ENCODE measurements at regions of chr7 and their contacts with region 1.

Region 1: GRCh38 chr7:16753102-16753931 is at the start of gene TSPAN13:
- DNase-seq: peak; percentile 80
- ATAC-seq: peak; percentile 88
- H3K4me3 Mint-ChIP-seq: peak within 1 kb of the TSS; percentile 88
- H3K27ac Mint-ChIP-seq: peak within 1 kb of the TSS; percentile 84
- H3K4me1 Mint-ChIP-seq: peaks cover 45% of the 10 kb centered on the region
- H3K27me3 Mint-ChIP-seq: no peaks in the 10 kb centered on the region
- CTCF ChIP-seq: no peak
- total RNA-seq, gene TSPAN13: 15.1 and 17.8 TPM in 2 replicates

Region 2: GRCh38 chr7:16420649-16421332 is 332.5 kb before region 1 on chr7:
- CTCF ChIA-PET with region 1: no interaction called
- POLR2A ChIA-PET with region 1: no interaction called
- intact Hi-C with region 1: loop called (anchors 2 kb)
- DNase-seq: peak; percentile 73
- ATAC-seq: peak; percentile 90
- H3K4me3 Mint-ChIP-seq: peak overlapping the region; percentile 93
- H3K27ac Mint-ChIP-seq: peak overlapping the region; percentile 95
- H3K4me1 Mint-ChIP-seq: peaks cover 22% of the 10 kb centered on the region
- H3K27me3 Mint-ChIP-seq: no peaks in the 10 kb centered on the region
- CTCF ChIP-seq: no peak

Region 3: GRCh38 chr7:16492513-16493062 is 260.7 kb before region 1 on chr7:
- CTCF ChIA-PET with region 1: no interaction called
- POLR2A ChIA-PET with region 1: no interaction called
- intact Hi-C with region 1: no loop called
- DNase-seq: no peak
- ATAC-seq: no peak
- H3K4me3 Mint-ChIP-seq: no peak overlapping the region
- H3K27ac Mint-ChIP-seq: no peak overlapping the region
- H3K4me1 Mint-ChIP-seq: no peaks in the 10 kb centered on the region
- H3K27me3 Mint-ChIP-seq: peaks cover 7% of the 10 kb centered on the region
- CTCF ChIP-seq: no peak

Region 4: DNA sequence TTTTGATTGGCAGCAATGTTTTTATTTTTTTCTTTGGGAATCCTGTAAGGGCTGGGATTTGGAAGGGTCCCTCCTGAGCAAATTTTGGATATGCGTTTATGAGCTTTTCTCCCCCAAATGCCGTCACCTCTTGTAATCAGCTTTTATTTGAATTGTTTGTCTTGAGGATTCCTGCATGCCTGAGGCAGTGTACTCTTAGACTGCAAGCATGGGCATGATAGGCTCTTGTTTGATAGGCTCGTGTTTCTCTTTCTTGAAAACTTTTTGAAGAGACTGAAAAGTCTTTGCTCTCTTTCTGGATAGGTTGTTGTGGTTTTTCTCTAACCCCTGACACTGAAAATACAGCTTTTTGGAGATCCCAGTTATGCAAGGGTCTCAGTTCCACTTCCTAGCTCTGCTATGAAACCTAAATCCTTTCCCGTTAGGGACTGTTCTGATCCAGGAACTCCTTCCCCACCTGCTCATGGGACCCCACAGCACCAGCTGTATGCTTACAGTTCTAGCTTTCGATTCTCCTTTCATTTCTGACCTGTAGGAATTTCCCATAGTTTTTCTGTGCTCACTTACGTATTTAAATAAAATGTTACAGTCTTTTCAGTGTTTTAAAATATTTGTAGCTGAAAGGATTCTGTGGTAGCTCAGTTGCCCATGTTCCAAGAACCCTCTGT is 17.5 kb after region 1 on chr7:
- CTCF ChIA-PET with region 1: interaction called, 3 read pairs
- POLR2A ChIA-PET with region 1: interaction called, 5 read pairs
- intact Hi-C with region 1: loop called (anchors 1 kb)
- DNase-seq: no peak
- ATAC-seq: no peak
- H3K4me3 Mint-ChIP-seq: peak overlapping the region; percentile 60
- H3K27ac Mint-ChIP-seq: peak overlapping the region; percentile 65
- H3K4me1 Mint-ChIP-seq: peaks cover 63% of the 10 kb centered on the region
- H3K27me3 Mint-ChIP-seq: no peaks in the 10 kb centered on the region
- CTCF ChIP-seq: no peak

Region 5: GRCh38 chr7:16817536-16817935 is 64.2 kb after region 1 on chr7:
- CTCF ChIA-PET with region 1: no interaction called
- POLR2A ChIA-PET with region 1: no interaction called
- intact Hi-C with region 1: no loop called
- DNase-seq: no peak
- ATAC-seq: no peak
- H3K4me3 Mint-ChIP-seq: no peak overlapping the region
- H3K27ac Mint-ChIP-seq: no peak overlapping the region
- H3K4me1 Mint-ChIP-seq: peaks cover 22% of the 10 kb centered on the region
- H3K27me3 Mint-ChIP-seq: no peaks in the 10 kb centered on the region
- CTCF ChIP-seq: no peak

Region 6: DNA sequence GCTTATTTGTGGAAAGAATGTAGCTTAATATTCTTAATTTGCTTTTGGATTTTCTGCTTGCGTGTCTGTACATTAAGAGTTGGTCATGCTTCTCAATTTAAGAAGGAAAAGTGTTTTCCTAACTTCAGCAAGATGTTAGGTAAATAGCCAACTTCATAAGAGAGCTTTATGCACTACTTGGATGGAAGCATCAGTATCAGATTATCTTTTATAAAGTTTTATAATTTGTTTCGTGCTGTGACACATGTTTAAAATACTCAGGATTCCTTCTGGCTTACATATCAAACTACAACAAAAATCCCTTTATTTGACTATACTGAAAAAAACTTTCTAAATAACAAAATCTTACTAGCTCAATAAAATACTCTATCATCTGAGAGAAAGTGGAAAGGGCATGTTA is 86.3 kb after region 1 on chr7:
- CTCF ChIA-PET with region 1: no interaction called
- POLR2A ChIA-PET with region 1: no interaction called
- intact Hi-C with region 1: no loop called
- DNase-seq: no peak
- ATAC-seq: no peak
- H3K4me3 Mint-ChIP-seq: no peak overlapping the region
- H3K27ac Mint-ChIP-seq: no peak overlapping the region
- H3K4me1 Mint-ChIP-seq: peaks cover 14% of the 10 kb centered on the region
- H3K27me3 Mint-ChIP-seq: peaks cover 3% of the 10 kb centered on the region
- CTCF ChIP-seq: no peak

Region 7: DNA sequence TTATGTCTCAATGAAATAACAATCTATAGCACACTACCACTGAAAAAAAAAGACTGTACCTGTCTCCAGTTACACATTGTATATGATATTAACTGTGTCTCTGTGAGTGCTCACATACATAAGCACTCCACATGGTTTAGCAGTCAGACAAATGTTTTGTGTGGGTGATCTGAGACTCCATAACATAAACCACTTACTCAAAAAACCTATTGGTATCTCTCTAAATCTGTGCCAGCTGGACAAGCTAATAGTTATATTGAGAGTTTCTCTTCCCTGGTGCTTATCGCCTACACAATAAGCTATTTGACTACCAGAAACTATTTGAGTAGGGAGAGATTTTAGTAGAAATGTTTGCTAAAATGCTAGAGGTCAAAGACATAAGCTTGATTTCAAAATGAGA is 318.5 kb after region 1 on chr7:
- CTCF ChIA-PET with region 1: no interaction called
- POLR2A ChIA-PET with region 1: no interaction called
- intact Hi-C with region 1: no loop called
- DNase-seq: no peak
- ATAC-seq: no peak
- H3K4me3 Mint-ChIP-seq: no peak overlapping the region
- H3K27ac Mint-ChIP-seq: no peak overlapping the region
- H3K4me1 Mint-ChIP-seq: peaks cover 16% of the 10 kb centered on the region
- H3K27me3 Mint-ChIP-seq: no peaks in the 10 kb centered on the region
- CTCF ChIP-seq: no peak

Region 8: DNA sequence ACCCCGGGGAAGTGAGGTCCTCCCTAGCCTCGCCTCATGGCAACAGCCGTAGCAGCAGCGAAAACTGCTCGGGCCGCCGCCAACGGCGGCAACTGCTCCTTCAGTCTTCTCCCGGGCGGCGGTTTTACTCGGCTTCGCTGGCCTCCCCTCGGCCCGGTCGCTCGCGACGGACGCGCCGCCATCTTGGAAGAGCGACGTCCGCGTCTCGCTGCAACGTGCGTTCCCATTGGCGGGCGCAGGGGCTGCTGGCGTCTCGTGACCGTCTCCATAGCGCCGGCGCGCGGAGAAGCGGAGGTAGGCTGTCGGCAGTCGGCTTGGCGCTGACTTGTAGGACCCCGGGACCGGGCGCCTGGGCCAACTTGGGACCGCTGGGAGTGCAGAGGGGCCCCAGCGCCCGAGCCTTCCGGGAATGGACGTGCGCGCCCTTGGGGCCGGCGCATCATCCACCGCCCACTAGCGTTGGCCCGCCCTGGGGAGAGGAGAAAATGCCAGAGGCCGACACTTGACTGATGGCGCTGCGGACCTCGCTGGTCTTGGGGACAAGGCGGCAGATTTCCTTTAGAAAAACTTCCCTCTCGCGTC is 1187.1 kb after region 1 on chr7 and contains the start of gene SNX13:
- CTCF ChIA-PET with region 1: no interaction called
- POLR2A ChIA-PET with region 1: no interaction called
- intact Hi-C with region 1: loop called (anchors 5 kb)
- DNase-seq: peak; percentile 84
- ATAC-seq: peak; percentile 91
- H3K4me3 Mint-ChIP-seq: peak within 1 kb of the TSS; percentile 98
- H3K27ac Mint-ChIP-seq: peak within 1 kb of the TSS; percentile 98
- H3K4me1 Mint-ChIP-seq: peaks cover 44% of the 10 kb centered on the region
- H3K27me3 Mint-ChIP-seq: no peaks in the 10 kb centered on the region
- CTCF ChIP-seq: no peak
- total RNA-seq, gene SNX13: 40.0 and 46.5 TPM in 2 replicates

Region 9: GRCh38 chr7:18508443-18509427 is 1755.4 kb after region 1 on chr7:
- CTCF ChIA-PET with region 1: no interaction called
- POLR2A ChIA-PET with region 1: no interaction called
- intact Hi-C with region 1: loop called (anchors 10 kb)
- DNase-seq: no peak
- ATAC-seq: peak; percentile 74
- H3K4me3 Mint-ChIP-seq: peak overlapping the region; percentile 82
- H3K27ac Mint-ChIP-seq: peak overlapping the region; percentile 99
- H3K4me1 Mint-ChIP-seq: peaks cover 89% of the 10 kb centered on the region
- H3K27me3 Mint-ChIP-seq: no peaks in the 10 kb centered on the region
- CTCF ChIP-seq: no peak

Measured in activated B cell treated with CpG ODN at 0.5 μM for 24 hours (primary cell).